Gastrocnemius medialis (tissue), 4 donors: ENCODE measurements at regions of chr4 and their contacts with region 1.

Region 1: DNA sequence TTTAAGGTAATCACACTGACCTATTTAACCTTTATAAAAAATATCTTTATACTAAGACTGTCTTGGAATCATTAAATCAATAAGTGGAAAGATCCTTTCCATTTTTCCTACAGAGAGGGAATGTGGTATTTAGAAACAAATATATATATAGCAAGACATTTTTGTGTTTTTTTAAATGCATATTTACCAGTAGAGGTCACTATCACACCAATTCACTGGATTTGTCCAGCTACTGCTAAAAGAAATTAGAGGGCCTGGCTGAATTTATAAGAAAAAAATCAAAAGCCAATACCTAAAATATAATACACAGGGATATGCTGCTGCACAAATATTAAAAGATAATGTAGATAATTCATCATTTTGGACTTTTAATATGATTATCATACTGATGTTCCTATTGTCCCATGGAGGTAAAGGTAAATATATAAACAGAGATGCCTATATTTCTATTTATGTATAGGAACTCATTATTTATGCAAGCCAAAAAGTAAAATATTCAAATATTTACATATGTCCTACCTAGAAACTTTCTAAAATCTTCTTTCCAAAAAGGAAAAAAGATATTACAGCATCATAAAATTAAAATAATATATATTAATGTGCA is 69.5 kb downstream of the PDE5A start:
- DNase-seq: no peak
- ATAC-seq: peak in 1 of 2 donors; percentile 21
- H3K4me3 ChIP-seq: no peak overlapping the region
- H3K27ac ChIP-seq: no peak overlapping the region
- H3K4me1 ChIP-seq: no peaks in the 10 kb centered on the region
- H3K27me3 ChIP-seq: no peaks in the 10 kb centered on the region
- CTCF ChIP-seq: peak; percentile 37 to 57 (median 44)
- POLR2A ChIP-seq: no peak

Region 2: GRCh38 chr4:119615068-119615719 is 56.0 kb after region 1 on chr4:
- in situ Hi-C with region 1: loop called in 2 of 4 experiments (anchors 10 kb)
- intact Hi-C with region 1: no loop called
- DNase-seq: no peak
- ATAC-seq: no peak
- H3K4me3 ChIP-seq: no peak overlapping the region
- H3K27ac ChIP-seq: peak overlapping the region in 1 of 4 donors; percentile 27
- H3K4me1 ChIP-seq: peaks cover 10% of the 10 kb centered on the region in 2 donors
- H3K27me3 ChIP-seq: no peaks in the 10 kb centered on the region
- CTCF ChIP-seq: no peak
- POLR2A ChIP-seq: no peak

Region 3: DNA sequence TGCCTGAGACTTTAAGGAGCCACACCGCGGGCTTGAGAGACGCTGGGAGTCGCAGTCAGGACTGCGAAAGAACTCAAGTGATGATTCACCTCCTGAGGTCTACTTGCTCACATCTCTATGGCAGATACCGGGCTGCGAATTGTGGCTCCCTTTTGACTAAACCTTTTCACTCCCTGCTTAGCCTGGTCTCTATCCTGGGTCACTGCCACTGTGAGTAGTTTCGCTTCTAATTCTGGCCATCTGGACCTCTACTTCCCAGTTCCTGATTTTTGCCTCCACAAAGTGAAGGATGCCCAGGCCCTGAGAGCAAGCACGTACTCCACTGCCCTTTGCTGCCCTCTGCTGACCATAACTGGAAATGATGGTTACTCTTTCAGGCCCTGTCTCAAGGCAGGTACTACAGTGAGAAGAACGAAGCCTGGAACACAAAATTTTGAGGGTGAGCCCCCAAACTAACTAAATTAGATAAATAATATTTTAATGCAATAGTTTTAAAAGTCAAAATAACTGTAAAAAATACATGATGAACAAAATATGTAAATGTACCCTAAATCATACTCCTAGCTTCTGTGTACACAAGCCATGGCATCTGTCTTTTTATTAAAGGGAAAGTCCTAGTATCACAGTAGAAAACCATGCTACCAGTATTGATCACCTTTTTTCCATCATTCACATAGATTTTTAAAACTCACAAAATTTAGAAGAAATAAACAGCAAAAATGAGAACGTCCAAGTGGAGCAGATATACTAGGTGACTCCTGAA is 490.8 kb after region 1 on chr4:
- in situ Hi-C with region 1: loop called in 3 of 4 experiments (anchors 10 to 25 kb)
- intact Hi-C with region 1: loop called (anchors 5 kb)
- DNase-seq: peak; percentile 51 to 73
- ATAC-seq: peak; percentile 90 to 92
- H3K4me3 ChIP-seq: peak overlapping the region in 3 of 4 donors; percentile 10 to 30 (median 29)
- H3K27ac ChIP-seq: peak overlapping the region; percentile 11 to 41 (median 28)
- H3K4me1 ChIP-seq: peaks cover 14 to 19% of the 10 kb centered on the region in 2 donors
- H3K27me3 ChIP-seq: no peaks in the 10 kb centered on the region
- CTCF ChIP-seq: peak; percentile 67 to 84 (median 79)
- POLR2A ChIP-seq: no peak

Region 4: GRCh38 chr4:120304801-120305200 is 745.7 kb after region 1 on chr4:
- in situ Hi-C with region 1: no loop called
- intact Hi-C with region 1: no loop called
- DNase-seq: no peak
- ATAC-seq: no peak
- H3K4me3 ChIP-seq: no peak overlapping the region
- H3K27ac ChIP-seq: no peak overlapping the region
- H3K4me1 ChIP-seq: no peaks in the 10 kb centered on the region
- H3K27me3 ChIP-seq: no peaks in the 10 kb centered on the region
- CTCF ChIP-seq: no peak
- POLR2A ChIP-seq: no peak